Ovary (tissue), 10 donors: ENCODE measurements at regions of chr6 and their contacts with region 1.

Region 1: GRCh38 chr6:37566111-37566949 is 66.6 kb upstream of the CCDC167 start:
- DNase-seq: peak; percentile 18 to 63 (median 44)
- H3K4me3 ChIP-seq: peak overlapping the region; percentile 17
- H3K27ac ChIP-seq: no peak overlapping the region
- H3K4me1 ChIP-seq: peaks cover 5% of the 10 kb centered on the region
- H3K27me3 ChIP-seq: no peaks in the 10 kb centered on the region
- CTCF ChIP-seq: peak; percentile 39 to 53 (median 48)
- EP300 ChIP-seq: no peak
- POLR2A ChIP-seq: no peak

Region 2: GRCh38 chr6:37473397-37474095 is 92.8 kb before region 1 on chr6:
- intact Hi-C with region 1: loop called in 1 of 4 experiments (anchors 10 kb)
- DNase-seq: no peak
- H3K4me3 ChIP-seq: no peak overlapping the region
- H3K27ac ChIP-seq: no peak overlapping the region
- H3K4me1 ChIP-seq: no peaks in the 10 kb centered on the region
- H3K27me3 ChIP-seq: no peaks in the 10 kb centered on the region
- CTCF ChIP-seq: no peak
- EP300 ChIP-seq: no peak
- POLR2A ChIP-seq: no peak

Region 3: GRCh38 chr6:38248500-38249234 is 682.3 kb after region 1 on chr6:
- intact Hi-C with region 1: no loop called
- DNase-seq: no peak
- H3K4me3 ChIP-seq: no peak overlapping the region
- H3K27ac ChIP-seq: no peak overlapping the region
- H3K4me1 ChIP-seq: no peaks in the 10 kb centered on the region
- H3K27me3 ChIP-seq: no peaks in the 10 kb centered on the region
- CTCF ChIP-seq: no peak
- EP300 ChIP-seq: no peak
- POLR2A ChIP-seq: no peak